Caco-2 (cell line): ENCODE measurements at regions of chr13 and their contacts with region 1.

Region 1: DNA sequence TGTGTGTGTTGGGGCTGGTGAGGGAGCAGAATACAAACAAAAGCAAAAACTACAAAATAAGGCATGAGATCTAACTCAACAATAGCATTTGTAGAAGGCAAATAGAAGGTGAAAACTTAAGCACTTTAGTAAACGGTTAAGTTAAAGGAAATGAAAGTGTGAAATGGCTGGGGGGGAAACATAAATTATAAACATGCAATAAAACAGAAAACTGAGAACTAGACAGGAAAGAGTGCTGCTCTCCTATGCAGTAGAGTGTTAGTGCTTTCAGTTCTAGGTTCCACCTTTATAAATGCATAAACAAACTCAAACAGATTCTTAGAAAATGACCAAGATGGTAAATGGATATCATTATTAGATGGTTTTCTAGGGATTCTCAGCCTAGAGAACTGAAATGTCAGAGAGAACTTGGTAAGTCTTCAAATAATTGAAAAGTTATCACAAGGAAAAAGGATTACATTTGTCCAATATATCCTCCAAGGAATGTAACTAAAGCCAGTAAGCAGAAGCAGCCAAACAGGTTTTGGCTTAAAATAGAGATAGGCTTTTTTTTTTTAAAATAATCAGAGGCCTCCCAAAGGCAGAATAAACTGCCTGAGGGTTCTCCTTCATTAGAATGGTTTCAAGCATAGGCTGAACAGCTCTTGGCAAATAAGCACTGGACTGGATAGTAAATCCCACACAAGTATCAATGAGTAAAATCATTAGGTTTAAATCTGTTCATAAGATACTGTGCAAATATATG is 23.3 kb downstream of the RBM26 start:
- DNase-seq: peak in 1 of 2 experiments; percentile 51
- H3K4me3 ChIP-seq: no peak overlapping the region
- H3K4me3 Mint-ChIP-seq: peak overlapping the region; percentile 38
- H3K27ac Mint-ChIP-seq: peak overlapping the region; percentile 42
- H3K4me1 ChIP-seq: peaks cover 35% of the 10 kb centered on the region
- H3K4me1 Mint-ChIP-seq: peaks cover 45% of the 10 kb centered on the region
- H3K27me3 ChIP-seq: no peaks in the 10 kb centered on the region
- H3K27me3 Mint-ChIP-seq: no peaks in the 10 kb centered on the region
- CTCF ChIP-seq: no peak

Region 2: GRCh38 chr13:79393564-79394249 is 11.0 kb after region 1 on chr13:
- CTCF ChIA-PET with region 1: interaction called, 3 read pairs
- POLR2A ChIA-PET with region 1: no interaction called
- intact Hi-C with region 1: loop called (anchors 1 kb)
- DNase-seq: peak; percentile 64 to 74
- H3K4me3 ChIP-seq: 0 out of 2 replicates have a peak overlapping the region, but pooled peaks have one; percentile 8
- H3K4me3 Mint-ChIP-seq: peak overlapping the region; percentile 50
- H3K27ac Mint-ChIP-seq: peak overlapping the region; percentile 28
- H3K4me1 ChIP-seq: peaks cover 21% of the 10 kb centered on the region
- H3K4me1 Mint-ChIP-seq: peaks cover 23% of the 10 kb centered on the region
- H3K27me3 ChIP-seq: no peaks in the 10 kb centered on the region
- H3K27me3 Mint-ChIP-seq: no peaks in the 10 kb centered on the region
- CTCF ChIP-seq: no peak

Region 3: GRCh38 chr13:79405829-79406596 is 23.3 kb after region 1 on chr13 and contains the start of gene RBM26:
- CTCF ChIA-PET with region 1: no interaction called
- POLR2A ChIA-PET with region 1: interaction called, 3 read pairs
- intact Hi-C with region 1: loop called (anchors 1 kb)
- DNase-seq: peak; percentile 96
- H3K4me3 ChIP-seq: peak within 1 kb of the TSS; percentile 86
- H3K4me3 Mint-ChIP-seq: no peak within 1 kb of the TSS
- H3K27ac Mint-ChIP-seq: peak within 1 kb of the TSS; percentile 83
- H3K4me1 ChIP-seq: peaks cover 21% of the 10 kb centered on the region
- H3K4me1 Mint-ChIP-seq: peaks cover 26% of the 10 kb centered on the region
- H3K27me3 ChIP-seq: no peaks in the 10 kb centered on the region
- H3K27me3 Mint-ChIP-seq: no peaks in the 10 kb centered on the region
- CTCF ChIP-seq: no peak
- total RNA-seq, gene RBM26: 57.4 and 60.4 TPM in 2 replicates